Activated CD4-positive, alpha-beta T cell treated with anti-CD3 and anti-CD28 coated beads, Interleukin-2, amount 10 ng/mL, durations not matched to agents 24 days and 14 days (primary cell): ENCODE measurements at regions of chr18 and their contacts with region 1.

Region 1: GRCh38 chr18:41842886-41843285 is 112.1 kb upstream of the PIK3C3 start:
- DNase-seq: no peak
- H3K4me3 Mint-ChIP-seq: no peak overlapping the region
- H3K27ac Mint-ChIP-seq: no peak overlapping the region
- H3K4me1 Mint-ChIP-seq: no peaks in the 10 kb centered on the region
- H3K27me3 Mint-ChIP-seq: no peaks in the 10 kb centered on the region

Region 2: GRCh38 chr18:41410007-41410406 is 432.9 kb before region 1 on chr18:
- intact Hi-C with region 1: loop called (anchors 5 kb)
- DNase-seq: no peak
- H3K4me3 Mint-ChIP-seq: no peak overlapping the region
- H3K27ac Mint-ChIP-seq: no peak overlapping the region
- H3K4me1 Mint-ChIP-seq: no peaks in the 10 kb centered on the region
- H3K27me3 Mint-ChIP-seq: no peaks in the 10 kb centered on the region

Region 3: DNA sequence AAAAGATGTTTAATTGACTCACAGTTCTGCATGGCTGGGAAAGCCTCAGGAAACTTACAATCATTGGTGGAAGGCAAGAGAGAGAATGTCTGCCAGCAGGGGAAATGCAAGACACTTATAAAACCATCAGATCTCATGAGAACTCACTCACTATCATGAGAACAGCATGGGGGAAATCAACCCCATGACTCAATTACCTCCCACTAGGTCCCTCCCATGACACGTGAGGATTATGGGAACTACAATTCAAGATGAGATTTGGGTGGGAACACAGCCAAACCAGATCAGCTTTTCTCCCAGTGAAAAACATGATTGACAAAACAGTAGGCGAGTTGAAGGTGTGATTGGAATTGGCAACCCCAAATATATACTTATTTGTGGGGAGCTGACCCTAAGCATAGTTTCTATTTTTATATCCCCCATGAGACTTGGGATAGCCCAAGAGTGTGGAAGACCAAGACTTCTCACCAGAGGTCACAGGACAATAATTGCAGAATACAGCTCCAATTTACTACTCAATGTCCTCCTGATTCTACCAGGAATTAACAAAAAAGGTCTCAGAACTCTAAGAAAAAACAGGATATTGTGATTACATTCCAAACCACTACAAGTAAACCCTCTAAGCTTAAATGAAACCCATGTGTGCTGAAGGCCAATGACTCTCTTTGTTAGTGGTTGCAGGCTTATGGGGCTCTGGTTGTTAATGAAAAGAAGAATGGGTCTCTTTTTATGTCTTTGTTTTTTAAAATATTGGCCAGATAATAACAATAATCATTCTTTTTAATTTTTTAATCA is 16.1 kb after region 1 on chr18:
- intact Hi-C with region 1: no loop called
- DNase-seq: no peak
- H3K4me3 Mint-ChIP-seq: no peak overlapping the region
- H3K27ac Mint-ChIP-seq: no peak overlapping the region
- H3K4me1 Mint-ChIP-seq: no peaks in the 10 kb centered on the region
- H3K27me3 Mint-ChIP-seq: no peaks in the 10 kb centered on the region